Activated B cell treated with CpG ODN at 0.5 μM for 24 hours (primary cell): ENCODE measurements at regions of chr12 and their contacts with region 1.

Region 1: DNA sequence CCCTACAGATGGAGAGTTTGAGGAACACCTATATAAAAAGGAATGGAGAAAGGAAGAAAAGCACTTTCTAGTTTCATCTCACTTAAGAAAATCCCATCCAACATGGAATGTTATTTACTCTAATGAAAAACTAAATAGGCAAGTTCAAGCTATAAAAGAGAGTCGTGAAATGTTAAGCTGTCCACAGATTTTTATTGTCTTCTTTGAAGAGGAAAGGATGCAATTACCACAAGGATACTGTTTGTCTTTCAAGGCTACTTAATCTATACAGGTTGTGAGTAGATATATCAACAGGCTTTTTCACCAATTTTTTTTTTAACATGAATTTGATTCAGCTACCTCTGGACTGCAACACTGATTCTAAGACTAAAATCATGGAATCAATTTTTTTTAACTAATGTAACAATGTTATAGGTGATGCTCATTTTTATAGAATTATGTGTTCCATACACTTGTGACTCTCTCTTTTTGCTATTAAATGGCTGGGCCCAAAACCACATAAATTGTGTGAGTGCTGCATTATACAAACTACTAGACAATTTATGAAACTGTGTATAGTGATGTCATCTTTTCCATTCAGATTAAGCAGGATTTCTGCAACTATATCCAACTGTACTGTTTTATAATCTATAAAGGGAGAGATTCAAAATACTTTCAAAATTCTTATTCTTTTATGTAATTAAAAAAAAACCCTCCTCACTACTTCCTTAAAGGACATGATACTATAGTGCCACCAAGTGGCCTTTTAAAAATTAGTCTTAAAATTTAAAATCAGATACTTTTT is 26.8 kb upstream of the BMAL2 start:
- DNase-seq: no peak
- ATAC-seq: peak; percentile 34
- H3K4me3 Mint-ChIP-seq: no peak overlapping the region
- H3K27ac Mint-ChIP-seq: no peak overlapping the region
- H3K4me1 Mint-ChIP-seq: no peaks in the 10 kb centered on the region
- H3K27me3 Mint-ChIP-seq: no peaks in the 10 kb centered on the region
- CTCF ChIP-seq: peak; percentile 49

Region 2: GRCh38 chr12:26853303-26854030 is 452.4 kb before region 1 on chr12:
- CTCF ChIA-PET with region 1: interaction called, 16 read pairs
- POLR2A ChIA-PET with region 1: no interaction called
- intact Hi-C with region 1: loop called (anchors 1 kb)
- DNase-seq: peak; percentile 46
- ATAC-seq: peak; percentile 97
- H3K4me3 Mint-ChIP-seq: no peak overlapping the region
- H3K27ac Mint-ChIP-seq: peak overlapping the region; percentile 38
- H3K4me1 Mint-ChIP-seq: no peaks in the 10 kb centered on the region
- H3K27me3 Mint-ChIP-seq: no peaks in the 10 kb centered on the region
- CTCF ChIP-seq: no peak

Region 3: DNA sequence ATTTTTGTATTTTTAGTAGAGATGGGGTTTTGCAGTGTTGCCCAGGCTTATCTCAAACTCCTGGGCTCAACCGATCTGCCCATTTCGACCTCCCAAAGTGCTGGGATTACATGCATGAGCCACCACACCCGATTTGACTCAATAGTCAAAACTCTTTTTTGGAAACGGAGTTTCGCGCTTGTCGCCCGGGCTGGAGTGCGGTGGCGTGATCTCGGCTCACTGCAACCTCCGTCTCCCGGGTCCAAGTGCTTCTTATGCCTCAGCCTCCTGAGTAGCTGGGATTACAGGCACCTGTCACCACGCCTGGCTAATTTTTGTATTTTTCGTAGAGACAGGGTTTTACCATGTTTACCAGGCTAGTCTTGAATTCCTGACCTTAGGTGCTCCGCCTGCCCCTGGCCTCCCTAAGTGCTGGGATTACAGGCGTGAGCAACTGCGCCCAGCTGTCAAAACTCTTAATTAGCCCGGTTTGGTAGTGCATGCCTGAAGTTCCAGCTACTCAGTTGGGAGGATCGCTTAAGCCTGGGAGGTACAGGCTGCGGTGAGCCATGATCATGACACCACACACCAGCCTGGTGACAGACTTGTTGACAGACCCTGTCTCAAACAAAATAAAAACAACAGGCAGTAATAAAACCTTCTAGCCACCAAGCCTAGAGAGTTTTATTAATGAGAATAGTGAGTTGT is 271.1 kb before region 1 on chr12:
- CTCF ChIA-PET with region 1: interaction called, 35 read pairs
- POLR2A ChIA-PET with region 1: no interaction called
- intact Hi-C with region 1: loop called (anchors 1 kb)
- DNase-seq: no peak
- ATAC-seq: no peak
- H3K4me3 Mint-ChIP-seq: no peak overlapping the region
- H3K27ac Mint-ChIP-seq: no peak overlapping the region
- H3K4me1 Mint-ChIP-seq: no peaks in the 10 kb centered on the region
- H3K27me3 Mint-ChIP-seq: no peaks in the 10 kb centered on the region
- CTCF ChIP-seq: no peak

Region 4: GRCh38 chr12:27123642-27124041 is 182.2 kb before region 1 on chr12:
- CTCF ChIA-PET with region 1: interaction called, 11 read pairs
- POLR2A ChIA-PET with region 1: no interaction called
- intact Hi-C with region 1: loop called (anchors 1 kb)
- DNase-seq: no peak
- ATAC-seq: no peak
- H3K4me3 Mint-ChIP-seq: no peak overlapping the region
- H3K27ac Mint-ChIP-seq: no peak overlapping the region
- H3K4me1 Mint-ChIP-seq: no peaks in the 10 kb centered on the region
- H3K27me3 Mint-ChIP-seq: no peaks in the 10 kb centered on the region
- CTCF ChIP-seq: no peak

Region 5: DNA sequence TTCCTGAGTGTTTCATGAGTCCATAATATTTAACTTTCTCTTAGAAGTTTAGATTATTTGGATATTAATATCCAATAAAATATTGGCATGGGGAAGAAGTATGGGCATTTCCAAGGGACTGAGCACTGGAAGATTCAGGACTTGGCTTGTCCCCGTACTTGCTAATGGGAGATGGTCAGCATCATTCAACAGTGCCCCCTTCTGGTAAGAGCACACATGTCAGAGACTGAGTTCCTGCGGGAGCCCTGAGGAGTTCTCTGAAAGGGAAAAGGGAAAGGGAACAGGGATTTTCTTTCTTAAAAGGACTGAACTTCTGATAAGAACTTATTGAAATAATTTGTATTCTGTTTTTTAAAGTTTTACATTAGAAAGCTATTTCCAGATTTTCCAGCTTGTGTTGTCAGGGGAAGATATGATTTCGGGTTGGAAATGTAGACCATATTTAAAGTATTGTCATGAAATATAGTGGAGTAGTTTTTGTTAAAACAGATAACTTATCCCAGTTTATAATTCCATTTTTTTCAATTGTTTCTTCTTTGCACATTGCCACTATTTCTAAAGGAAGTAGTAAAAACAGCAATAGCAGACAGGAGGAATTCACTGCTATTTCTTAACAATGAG is 163.7 kb before region 1 on chr12:
- CTCF ChIA-PET with region 1: interaction called, 3 read pairs
- POLR2A ChIA-PET with region 1: no interaction called
- intact Hi-C with region 1: loop called (anchors 1 kb)
- DNase-seq: no peak
- ATAC-seq: peak; percentile 76
- H3K4me3 Mint-ChIP-seq: no peak overlapping the region
- H3K27ac Mint-ChIP-seq: no peak overlapping the region
- H3K4me1 Mint-ChIP-seq: peaks cover 12% of the 10 kb centered on the region
- H3K27me3 Mint-ChIP-seq: no peaks in the 10 kb centered on the region
- CTCF ChIP-seq: peak; percentile 43

Region 6: DNA sequence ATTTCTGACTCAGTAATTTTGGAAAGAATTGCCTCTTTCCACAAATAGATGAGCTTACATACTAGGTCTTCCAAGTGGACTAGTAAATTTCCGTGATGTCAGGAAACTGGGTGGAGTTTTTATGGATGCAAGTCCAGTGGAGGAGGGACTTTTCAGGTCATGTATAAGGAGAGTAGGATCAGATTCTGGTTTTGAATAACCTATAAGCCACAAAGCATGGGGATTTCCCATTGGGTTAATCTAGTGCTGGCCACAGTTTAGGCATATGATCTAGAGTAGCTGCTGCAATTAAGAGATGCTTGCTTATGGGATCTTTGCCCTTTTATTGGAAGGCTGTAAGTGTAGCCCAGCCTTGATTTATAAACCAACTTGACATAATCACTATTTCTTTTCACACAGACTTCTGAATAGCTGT is 28.0 kb before region 1 on chr12:
- CTCF ChIA-PET with region 1: interaction called, 14 read pairs
- POLR2A ChIA-PET with region 1: no interaction called
- intact Hi-C with region 1: no loop called
- DNase-seq: no peak
- ATAC-seq: peak; percentile 64
- H3K4me3 Mint-ChIP-seq: no peak overlapping the region
- H3K27ac Mint-ChIP-seq: no peak overlapping the region
- H3K4me1 Mint-ChIP-seq: peaks cover 13% of the 10 kb centered on the region
- H3K27me3 Mint-ChIP-seq: no peaks in the 10 kb centered on the region
- CTCF ChIP-seq: no peak

Region 7: DNA sequence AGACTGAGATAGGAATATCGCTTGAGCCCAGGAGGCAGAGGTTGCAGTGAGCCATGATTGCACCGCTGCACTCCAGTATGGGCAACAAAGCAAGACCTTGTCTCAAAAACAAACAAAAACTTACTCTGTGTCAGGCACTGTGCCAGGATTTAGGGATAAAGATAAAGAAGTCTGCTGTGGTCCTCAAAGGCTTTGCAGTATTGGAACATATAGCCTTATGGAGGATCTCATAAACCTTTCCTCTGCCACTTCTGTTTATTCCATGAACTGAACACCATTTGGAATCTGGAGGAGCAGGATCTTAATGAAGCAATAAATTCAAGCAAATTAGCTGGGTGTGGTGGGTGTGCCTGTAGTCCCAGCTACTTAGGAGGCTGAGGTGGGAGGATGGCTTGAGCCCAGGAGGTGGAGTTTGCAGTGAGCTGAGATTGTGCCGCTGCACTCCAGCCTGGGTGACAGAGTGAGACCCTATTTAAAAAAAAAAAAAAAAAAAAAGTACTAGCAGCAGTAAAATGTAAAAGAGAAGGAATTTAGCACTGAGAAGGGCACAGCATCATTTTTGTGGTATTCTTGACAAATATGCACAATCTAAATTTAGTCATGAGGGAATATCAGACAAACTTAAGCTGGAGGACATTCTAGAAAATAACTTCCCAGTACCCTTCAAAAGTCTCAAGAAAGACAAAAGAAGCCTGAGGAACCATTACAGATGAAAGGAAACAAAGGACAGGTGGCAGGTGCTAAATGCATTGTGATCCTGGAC is 53.9 kb after region 1 on chr12:
- CTCF ChIA-PET with region 1: no interaction called
- POLR2A ChIA-PET with region 1: no interaction called
- intact Hi-C with region 1: no loop called
- DNase-seq: no peak
- ATAC-seq: no peak
- H3K4me3 Mint-ChIP-seq: no peak overlapping the region
- H3K27ac Mint-ChIP-seq: no peak overlapping the region
- H3K4me1 Mint-ChIP-seq: no peaks in the 10 kb centered on the region
- H3K27me3 Mint-ChIP-seq: no peaks in the 10 kb centered on the region
- CTCF ChIP-seq: no peak